Heart left ventricle (tissue), 16 donors: ENCODE measurements at regions of chr1 and their contacts with region 1.

Region 1: DNA sequence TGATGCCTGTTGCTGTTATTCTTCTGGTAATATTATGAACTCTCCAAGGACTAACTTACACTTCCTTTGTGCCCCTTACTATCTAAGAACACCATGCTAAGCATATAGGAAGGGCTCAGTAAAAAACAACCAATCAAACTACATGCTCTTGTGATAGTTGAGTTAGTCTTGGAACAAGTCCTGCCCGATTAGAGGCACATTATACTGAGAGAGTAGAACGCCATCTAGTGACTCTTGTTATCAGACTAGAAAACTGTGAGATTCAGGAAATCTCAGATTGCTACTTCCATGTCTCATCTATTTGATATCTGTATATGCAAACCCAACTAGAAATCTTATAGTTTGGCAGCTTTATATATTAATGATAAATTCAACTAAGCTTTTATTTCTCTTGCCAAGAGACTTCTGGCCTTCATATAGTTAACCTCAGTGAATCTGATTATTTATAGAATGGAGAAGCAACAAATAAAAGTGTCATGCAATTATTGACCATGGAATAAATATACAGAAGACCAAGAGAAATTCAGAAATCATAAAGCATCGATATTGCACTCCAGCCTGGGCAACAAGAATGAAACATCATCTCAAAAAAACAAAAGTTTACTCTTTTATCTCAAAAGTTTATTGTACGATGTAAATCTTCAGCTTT is 7.8 kb upstream of the SRRM1 start:
- DNase-seq: peak in 1 of 5 donors; percentile 9
- ATAC-seq: peak in 3 of 4 donors; percentile 63 to 79 (median 76)
- H3K4me3 ChIP-seq: no peak overlapping the region
- H3K27ac ChIP-seq: no peak overlapping the region
- H3K4me1 ChIP-seq: peaks cover 0 to 5% (median 0%) of the 10 kb centered on the region in 12 donors
- H3K27me3 ChIP-seq: peaks cover 0 to 7% (median 0%) of the 10 kb centered on the region in 9 donors
- CTCF ChIP-seq: peak; percentile 31 to 76 (median 60)
- POLR2A ChIP-seq: no peak

Region 2: GRCh38 chr1:24201941-24202440 is 433.3 kb before region 1 on chr1:
- intact Hi-C with region 1: loop called in 8 of 10 experiments (anchors 2 to 10 kb)
- DNase-seq: peak; percentile 60 to 73 (median 71)
- ATAC-seq: peak; percentile 65 to 83 (median 80)
- H3K4me3 ChIP-seq: no peak overlapping the region
- H3K27ac ChIP-seq: peak overlapping the region in 2 of 12 donors; percentile 1 to 9
- H3K4me1 ChIP-seq: peaks cover 0 to 19% (median 0%) of the 10 kb centered on the region in 12 donors
- H3K27me3 ChIP-seq: no peaks in the 10 kb centered on the region
- CTCF ChIP-seq: peak; percentile 67 to 84 (median 78)
- POLR2A ChIP-seq: no peak

Region 3: DNA sequence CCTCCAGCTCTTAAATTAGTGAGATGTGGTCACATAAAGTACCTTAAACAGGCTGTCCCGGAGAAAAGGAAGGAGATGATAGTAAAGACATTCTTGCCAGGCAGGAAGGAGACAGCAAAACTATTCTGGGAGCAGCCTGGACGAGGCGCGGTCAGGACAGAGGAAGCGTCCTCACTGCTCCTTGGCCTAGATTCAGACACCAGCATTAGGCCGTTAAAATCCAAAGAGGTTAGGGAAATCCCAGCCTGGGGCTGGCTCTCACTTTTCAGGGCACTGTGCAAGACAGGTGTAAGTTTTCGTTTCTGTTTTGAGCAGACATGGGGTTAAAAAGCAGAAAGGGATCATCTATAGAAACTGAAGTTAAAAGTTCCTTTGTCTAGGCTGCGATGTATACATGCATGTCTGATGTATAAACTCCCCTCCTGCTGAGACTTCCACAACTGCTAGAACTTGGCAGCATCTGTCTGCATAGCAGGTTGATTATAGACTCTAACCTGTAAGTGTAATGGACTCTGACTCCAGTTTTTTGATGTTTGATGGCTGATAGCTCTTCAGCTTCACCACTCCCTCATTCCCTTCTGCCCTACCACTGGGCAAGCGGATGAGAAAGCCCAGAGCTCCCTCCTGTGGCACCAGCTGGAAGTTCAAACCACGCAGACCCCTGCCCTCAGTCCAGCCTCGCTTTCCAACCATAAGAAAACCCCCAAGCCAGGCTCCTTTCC is 243.3 kb before region 1 on chr1:
- intact Hi-C with region 1: loop called in 5 of 10 experiments (anchors 5 to 10 kb)
- DNase-seq: peak in 4 of 5 donors; percentile 58 to 67 (median 60)
- ATAC-seq: peak; percentile 83 to 89 (median 86)
- H3K4me3 ChIP-seq: peak overlapping the region in 9 of 12 donors; percentile 14 to 38 (median 25)
- H3K27ac ChIP-seq: peak overlapping the region; percentile 58 to 86 (median 74)
- H3K4me1 ChIP-seq: peaks cover 0 to 21% (median 14%) of the 10 kb centered on the region in 12 donors
- H3K27me3 ChIP-seq: no peaks in the 10 kb centered on the region
- CTCF ChIP-seq: peak; percentile 61 to 80 (median 72)
- POLR2A ChIP-seq: no peak

Region 4: DNA sequence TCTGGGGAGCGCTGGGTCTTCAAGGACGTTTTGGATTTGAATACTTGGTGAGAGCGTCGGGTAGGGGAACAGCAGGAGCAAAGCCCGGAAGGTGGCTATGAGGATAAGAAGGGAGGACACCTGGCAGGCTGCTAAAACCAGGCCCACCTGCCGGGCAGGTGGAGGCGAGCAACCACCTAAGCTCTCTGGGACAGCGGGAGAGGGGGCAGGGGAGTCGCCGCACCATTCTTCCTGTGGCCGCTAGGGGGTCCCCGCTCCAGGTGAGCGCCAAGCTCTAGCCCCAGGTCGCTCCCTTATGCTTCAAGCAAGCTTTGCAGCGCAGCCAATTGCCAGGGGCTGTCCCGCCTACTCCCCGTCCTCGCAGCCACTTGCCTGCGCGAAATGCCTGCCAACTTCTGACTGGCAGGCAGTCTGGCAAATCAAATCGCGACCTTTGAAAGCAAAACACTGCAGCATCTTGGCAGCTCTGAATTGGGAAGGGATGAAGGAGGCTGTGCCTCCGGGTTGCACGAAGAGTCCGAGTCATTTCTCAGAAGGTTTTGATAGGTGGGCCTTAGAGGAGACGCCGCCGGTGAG is 219.9 kb before region 1 on chr1 and contains the start of gene NIPAL3:
- intact Hi-C with region 1: loop called in 6 of 10 experiments (anchors 5 to 10 kb)
- DNase-seq: peak; percentile 98 to 99 (median 99)
- ATAC-seq: peak; percentile 95 to 97 (median 96)
- H3K4me3 ChIP-seq: peak within 1 kb of the TSS; percentile 38 to 95 (median 72)
- H3K27ac ChIP-seq: peak within 1 kb of the TSS in 8 of 12 donors; percentile 16 to 60 (median 46)
- H3K4me1 ChIP-seq: peaks cover 0 to 51% (median 23%) of the 10 kb centered on the region in 12 donors
- H3K27me3 ChIP-seq: no peaks in the 10 kb centered on the region
- CTCF ChIP-seq: peak; percentile 62 to 85 (median 80)
- POLR2A ChIP-seq: peak in 1 of 2 donors; percentile 33
- total RNA-seq, gene NIPAL3: 24.7 to 48.3 (median 29.7) TPM

Region 5: GRCh38 chr1:24421502-24421901 is 213.8 kb before region 1 on chr1:
- intact Hi-C with region 1: loop called in 6 of 10 experiments (anchors 5 to 10 kb)
- DNase-seq: no peak
- ATAC-seq: no peak
- H3K4me3 ChIP-seq: no peak overlapping the region
- H3K27ac ChIP-seq: no peak overlapping the region
- H3K4me1 ChIP-seq: peaks cover 0 to 30% (median 7%) of the 10 kb centered on the region in 12 donors
- H3K27me3 ChIP-seq: no peaks in the 10 kb centered on the region
- CTCF ChIP-seq: no peak
- POLR2A ChIP-seq: no peak

Region 6: GRCh38 chr1:24541711-24542346 is 93.5 kb before region 1 on chr1:
- intact Hi-C with region 1: loop called (anchors 2 to 5 kb)
- DNase-seq: no peak
- ATAC-seq: peak in 2 of 4 donors; percentile 30 to 38
- H3K4me3 ChIP-seq: no peak overlapping the region
- H3K27ac ChIP-seq: no peak overlapping the region
- H3K4me1 ChIP-seq: no peaks in the 10 kb centered on the region
- H3K27me3 ChIP-seq: no peaks in the 10 kb centered on the region
- CTCF ChIP-seq: peak; percentile 48 to 70 (median 58)
- POLR2A ChIP-seq: no peak

Region 7: GRCh38 chr1:24547195-24547594 is 88.1 kb before region 1 on chr1:
- intact Hi-C with region 1: loop called (anchors 2 to 5 kb)
- DNase-seq: no peak
- ATAC-seq: no peak
- H3K4me3 ChIP-seq: no peak overlapping the region
- H3K27ac ChIP-seq: no peak overlapping the region
- H3K4me1 ChIP-seq: no peaks in the 10 kb centered on the region
- H3K27me3 ChIP-seq: peaks cover 0 to 17% (median 0%) of the 10 kb centered on the region in 9 donors
- CTCF ChIP-seq: no peak
- POLR2A ChIP-seq: no peak

Region 8: GRCh38 chr1:24621121-24621520 is 14.2 kb before region 1 on chr1:
- intact Hi-C with region 1: no loop called
- DNase-seq: no peak
- ATAC-seq: no peak
- H3K4me3 ChIP-seq: no peak overlapping the region
- H3K27ac ChIP-seq: no peak overlapping the region
- H3K4me1 ChIP-seq: no peaks in the 10 kb centered on the region
- H3K27me3 ChIP-seq: peaks cover 0 to 10% (median 0%) of the 10 kb centered on the region in 9 donors
- CTCF ChIP-seq: no peak
- POLR2A ChIP-seq: no peak

Region 9: DNA sequence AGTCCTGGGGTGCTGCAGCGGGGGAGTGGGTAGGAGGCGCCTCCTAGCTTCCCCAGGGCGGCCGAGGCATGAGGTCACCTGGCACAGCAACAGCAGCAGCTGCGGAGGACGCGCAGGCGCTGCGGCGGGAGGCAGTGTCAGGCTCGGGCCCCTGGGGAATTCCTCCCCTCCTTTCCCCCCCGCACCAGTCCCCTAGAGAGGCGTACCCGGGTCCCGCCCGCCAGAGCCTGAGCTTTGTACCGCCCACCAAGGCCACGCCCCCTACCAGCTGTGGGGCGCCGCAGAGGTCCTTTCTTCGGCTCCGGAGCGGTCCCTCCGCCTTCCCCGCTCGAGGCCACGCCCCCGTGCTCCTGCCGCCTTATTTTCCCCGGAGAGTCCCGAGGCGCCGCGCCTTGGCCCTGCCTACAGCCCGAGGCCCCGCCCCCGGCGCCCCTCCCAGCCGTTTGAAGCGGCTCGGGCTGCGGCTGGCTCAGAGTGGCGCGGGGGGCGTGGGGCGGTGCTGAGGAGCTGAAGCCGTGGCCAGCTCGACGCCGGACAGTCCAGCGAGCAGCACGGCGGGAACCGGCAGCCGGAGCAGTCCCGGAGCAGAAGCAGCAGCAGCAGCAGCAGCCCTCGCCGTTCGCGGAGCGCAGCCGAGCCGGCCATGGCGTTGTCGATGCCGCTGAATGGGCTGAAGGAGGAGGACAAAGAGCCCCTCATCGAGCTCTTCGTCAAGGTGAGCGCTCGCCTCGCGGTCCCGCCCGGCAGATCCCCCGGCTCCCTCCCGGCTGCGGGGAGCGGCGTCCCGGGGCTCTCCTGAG is 109.8 kb after region 1 on chr1 and contains the start of gene CLIC4:
- intact Hi-C with region 1: no loop called
- DNase-seq: peak; percentile 100
- ATAC-seq: peak; percentile 96 to 97 (median 96)
- H3K4me3 ChIP-seq: peak within 1 kb of the TSS; percentile 76 to 98 (median 89)
- H3K27ac ChIP-seq: peak within 1 kb of the TSS; percentile 89 to 99 (median 96)
- H3K4me1 ChIP-seq: peaks cover 0 to 57% (median 38%) of the 10 kb centered on the region in 12 donors
- H3K27me3 ChIP-seq: no peaks in the 10 kb centered on the region
- CTCF ChIP-seq: peak in 9 of 12 donors; percentile 11 to 67 (median 41)
- POLR2A ChIP-seq: peak; percentile 92 to 100
- total RNA-seq, gene CLIC4: 280 to 917 (median 387) TPM

Region 10: DNA sequence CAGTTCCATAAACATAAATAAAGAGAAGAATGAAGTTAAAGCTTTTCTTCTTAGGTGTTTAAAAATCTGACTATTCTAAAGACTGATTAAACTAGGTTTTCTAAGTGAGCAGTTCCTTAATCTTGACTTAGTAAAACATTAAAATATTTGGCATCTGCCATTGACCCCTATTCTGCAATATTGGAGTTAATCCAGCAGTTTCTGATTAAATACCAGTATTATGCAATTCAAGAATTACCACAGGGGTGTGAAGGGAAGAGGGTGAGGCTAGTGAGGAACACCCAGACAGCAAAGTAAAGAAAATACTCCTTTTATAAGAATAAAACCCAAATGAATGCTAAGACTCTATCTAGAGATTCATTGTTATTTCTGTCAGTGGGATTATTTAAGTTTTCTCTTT is 150.9 kb after region 1 on chr1:
- intact Hi-C with region 1: no loop called
- DNase-seq: no peak
- ATAC-seq: peak in 3 of 4 donors; percentile 55 to 80 (median 77)
- H3K4me3 ChIP-seq: no peak overlapping the region
- H3K27ac ChIP-seq: peak overlapping the region in 6 of 12 donors; percentile 8 to 52 (median 16)
- H3K4me1 ChIP-seq: peaks cover 0 to 42% (median 15%) of the 10 kb centered on the region in 12 donors
- H3K27me3 ChIP-seq: no peaks in the 10 kb centered on the region
- CTCF ChIP-seq: no peak
- POLR2A ChIP-seq: no peak

Region 11: GRCh38 chr1:24822887-24823286 is 187.6 kb after region 1 on chr1:
- intact Hi-C with region 1: no loop called
- DNase-seq: no peak
- ATAC-seq: no peak
- H3K4me3 ChIP-seq: no peak overlapping the region
- H3K27ac ChIP-seq: peak overlapping the region in 3 of 12 donors; percentile 2 to 54 (median 18)
- H3K4me1 ChIP-seq: peaks cover 0 to 57% (median 31%) of the 10 kb centered on the region in 12 donors
- H3K27me3 ChIP-seq: no peaks in the 10 kb centered on the region
- CTCF ChIP-seq: no peak
- POLR2A ChIP-seq: no peak